ENCODE measurements at regions of chr3 and their contacts with region 1.

Region 1: GRCh38 chr3:11271986-11272904 is at the start of gene ATG7:
- DNase-seq: peak; percentile 91
- ATAC-seq: peak; percentile 95
- H3K4me3 ChIP-seq: peak within 1 kb of the TSS; percentile 89 to 99 (median 91)
- H3K27ac ChIP-seq: peak within 1 kb of the TSS; percentile 66
- H3K4me1 ChIP-seq: peaks cover 32% of the 10 kb centered on the region
- H3K27me3 ChIP-seq: no peaks in the 10 kb centered on the region; a peak in 1 of 5 replicates
- CTCF ChIP-seq: peak; percentile 50
- EP300 ChIP-seq: no peak
- POLR2A ChIP-seq: peak; percentile 92 to 93
- RAD21 ChIP-seq: peak; percentile 47; the same call in 1 of the 2 replicates
- total RNA-seq, gene ATG7: 22.1 and 31.4 TPM in 2 replicates

Region 2: GRCh38 chr3:11236595-11237461 is 35.4 kb before region 1 on chr3:
- CTCF ChIA-PET with region 1: no interaction called
- POLR2A ChIA-PET with region 1: no interaction called
- in situ Hi-C with region 1: no loop called
- intact Hi-C with region 1: loop called (anchors 2 kb)
- DNase-seq: peak; percentile 39
- ATAC-seq: peak; percentile 79
- H3K4me3 ChIP-seq: no peak overlapping the region
- H3K27ac ChIP-seq: no peak overlapping the region
- H3K4me1 ChIP-seq: no peaks in the 10 kb centered on the region
- H3K27me3 ChIP-seq: peaks cover 0 to 3% of the 10 kb centered on the region in 2 experiments; a peak in 2 of 5 replicates
- CTCF ChIP-seq: peak; percentile 63
- EP300 ChIP-seq: no peak
- POLR2A ChIP-seq: no peak
- RAD21 ChIP-seq: no peak

Region 3: GRCh38 chr3:11603628-11604027 is 331.4 kb after region 1 on chr3:
- CTCF ChIA-PET with region 1: no interaction called
- POLR2A ChIA-PET with region 1: no interaction called
- in situ Hi-C with region 1: no loop called
- intact Hi-C with region 1: no loop called
- DNase-seq: no peak
- ATAC-seq: no peak
- H3K4me3 ChIP-seq: no peak overlapping the region
- H3K27ac ChIP-seq: no peak overlapping the region
- H3K4me1 ChIP-seq: peaks cover 29% of the 10 kb centered on the region
- H3K27me3 ChIP-seq: no peaks in the 10 kb centered on the region
- CTCF ChIP-seq: no peak
- EP300 ChIP-seq: no peak
- POLR2A ChIP-seq: no peak
- RAD21 ChIP-seq: no peak